BJ (cell line): ENCODE measurements at regions of chr20 and their contacts with region 1.

Region 1: GRCh38 chr20:9392892-9393857 is 121.2 kb upstream of the LAMP5 start:
- DNase-seq: no peak
- H3K4me3 ChIP-seq: no peak overlapping the region
- H3K27me3 ChIP-seq: no peaks in the 10 kb centered on the region
- CTCF ChIP-seq: peak; percentile 91

Region 2: GRCh38 chr20:8749986-8750385 is 643.2 kb before region 1 on chr20:
- CTCF ChIA-PET with region 1: interaction called, 13 read pairs
- POLR2A ChIA-PET with region 1: no interaction called
- DNase-seq: no peak
- H3K4me3 ChIP-seq: no peak overlapping the region
- H3K27me3 ChIP-seq: no peaks in the 10 kb centered on the region
- CTCF ChIP-seq: no peak

Region 3: DNA sequence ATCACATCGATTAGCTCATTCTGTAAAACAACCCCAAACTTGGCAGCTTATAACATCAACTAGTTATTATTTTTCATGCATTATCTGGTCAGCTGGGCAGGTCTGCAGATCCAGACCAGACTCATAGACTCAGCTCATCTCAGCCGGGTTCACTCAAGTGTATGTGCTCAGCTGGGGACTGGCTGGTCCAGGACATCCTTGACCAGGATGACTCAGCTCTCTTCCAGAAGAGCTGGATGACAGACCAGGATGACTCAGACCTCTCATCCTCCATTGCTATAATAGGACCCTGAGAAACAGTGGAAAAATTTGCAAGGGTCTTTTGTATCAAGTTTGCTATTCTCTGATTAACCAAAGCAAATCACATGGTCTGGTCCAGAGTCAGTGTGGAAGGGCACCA is 636.8 kb before region 1 on chr20:
- CTCF ChIA-PET with region 1: interaction called, 17 read pairs
- POLR2A ChIA-PET with region 1: no interaction called
- DNase-seq: peak; percentile 40
- H3K4me3 ChIP-seq: no peak overlapping the region
- H3K27me3 ChIP-seq: no peaks in the 10 kb centered on the region
- CTCF ChIP-seq: no peak

Region 4: DNA sequence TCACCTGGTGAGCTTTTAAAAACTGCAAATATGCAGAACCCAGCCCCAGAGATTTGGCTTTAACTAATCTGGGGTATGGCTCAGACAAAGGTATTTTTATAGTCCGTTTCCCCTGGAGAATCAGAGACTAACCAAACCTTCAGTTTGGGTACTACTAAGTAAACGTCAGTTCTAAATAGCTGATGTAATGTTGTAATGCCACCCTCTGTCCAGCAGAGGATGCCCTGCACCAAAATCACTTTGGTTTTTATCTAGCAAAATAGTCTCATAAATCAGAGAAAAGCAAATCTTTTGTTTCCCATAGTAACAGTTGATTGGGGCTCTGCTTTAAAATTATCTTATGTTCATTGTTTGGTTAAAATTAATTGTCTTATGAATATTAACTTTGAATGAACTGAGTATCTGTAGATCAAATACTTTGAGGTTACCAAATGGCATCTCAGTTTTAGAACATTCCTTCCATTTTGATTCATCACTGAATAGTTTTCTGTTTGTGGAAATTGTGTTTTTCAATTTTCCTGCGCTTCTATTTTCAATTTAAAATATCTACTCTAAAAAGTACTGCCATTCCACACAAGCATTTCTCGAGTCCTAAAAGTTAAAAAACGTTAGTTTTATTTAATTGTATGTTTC is 602.6 kb before region 1 on chr20:
- CTCF ChIA-PET with region 1: interaction called, 18 read pairs
- POLR2A ChIA-PET with region 1: no interaction called
- DNase-seq: no peak
- H3K4me3 ChIP-seq: no peak overlapping the region
- H3K27me3 ChIP-seq: no peaks in the 10 kb centered on the region
- CTCF ChIP-seq: peak; percentile 98

Region 5: DNA sequence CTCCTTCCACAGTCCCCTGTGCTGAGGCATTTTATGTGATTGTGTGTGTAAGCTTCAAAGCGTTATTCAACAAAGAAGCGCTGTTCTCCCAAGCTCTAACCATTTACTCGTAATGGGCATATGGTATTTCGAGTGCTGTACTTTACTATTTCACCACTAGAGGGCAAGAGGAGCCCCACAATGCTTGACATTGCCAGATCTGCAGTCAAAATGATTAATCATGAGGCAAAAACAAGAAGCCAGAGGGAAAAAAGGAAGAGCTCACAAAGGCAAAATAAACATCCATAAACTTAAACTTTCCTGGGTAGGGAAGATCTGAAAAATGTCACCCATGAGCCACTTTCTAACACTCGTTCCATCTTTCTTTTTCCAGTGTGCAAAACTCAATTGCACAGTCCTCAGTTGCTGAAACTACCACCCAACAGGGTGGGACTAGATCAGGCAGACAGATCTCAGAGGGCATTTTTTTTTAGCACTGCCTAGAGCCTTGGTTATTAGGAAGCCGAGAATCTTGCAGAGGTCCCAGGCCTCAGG is 539.3 kb before region 1 on chr20:
- CTCF ChIA-PET with region 1: interaction called, 14 read pairs
- POLR2A ChIA-PET with region 1: no interaction called
- DNase-seq: no peak
- H3K4me3 ChIP-seq: no peak overlapping the region
- H3K27me3 ChIP-seq: no peaks in the 10 kb centered on the region
- CTCF ChIP-seq: peak; percentile 82

Region 6: DNA sequence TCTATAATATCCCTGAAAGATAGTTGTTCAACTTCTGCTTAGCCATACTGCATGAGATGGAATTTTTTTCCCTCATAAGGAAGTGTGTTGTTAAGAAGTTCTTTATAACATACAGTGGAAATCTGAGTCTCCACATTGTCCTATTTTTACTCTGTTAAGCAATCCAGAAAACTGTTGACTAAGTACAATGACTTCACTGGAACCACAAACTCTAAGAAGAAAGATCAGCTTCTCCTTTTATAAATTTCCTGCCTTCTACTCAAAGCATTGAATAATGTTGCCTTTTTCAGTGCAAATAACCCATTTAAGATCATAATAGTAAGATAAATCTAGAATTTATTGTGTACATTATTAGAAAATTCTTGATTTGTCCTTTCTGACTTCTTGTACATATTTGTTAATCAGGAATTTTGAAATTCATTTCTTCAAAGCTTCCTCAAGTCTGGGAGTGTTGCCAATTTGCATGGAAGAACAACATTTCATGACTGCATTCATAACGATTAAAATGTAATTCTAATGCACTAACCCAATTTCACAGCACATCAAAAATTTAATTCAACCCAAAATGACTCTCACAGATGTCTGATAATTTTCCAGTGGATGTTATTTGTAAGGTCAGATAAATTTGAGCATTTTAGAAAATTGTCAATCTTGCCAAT is 596.0 kb after region 1 on chr20:
- CTCF ChIA-PET with region 1: no interaction called
- POLR2A ChIA-PET with region 1: no interaction called
- DNase-seq: peak; percentile 19
- H3K4me3 ChIP-seq: no peak overlapping the region
- H3K27me3 ChIP-seq: no peaks in the 10 kb centered on the region
- CTCF ChIP-seq: no peak